CD8-positive, alpha-beta T cell (primary cell): ENCODE measurements at regions of chr20 and their contacts with region 1.

Region 1: DNA sequence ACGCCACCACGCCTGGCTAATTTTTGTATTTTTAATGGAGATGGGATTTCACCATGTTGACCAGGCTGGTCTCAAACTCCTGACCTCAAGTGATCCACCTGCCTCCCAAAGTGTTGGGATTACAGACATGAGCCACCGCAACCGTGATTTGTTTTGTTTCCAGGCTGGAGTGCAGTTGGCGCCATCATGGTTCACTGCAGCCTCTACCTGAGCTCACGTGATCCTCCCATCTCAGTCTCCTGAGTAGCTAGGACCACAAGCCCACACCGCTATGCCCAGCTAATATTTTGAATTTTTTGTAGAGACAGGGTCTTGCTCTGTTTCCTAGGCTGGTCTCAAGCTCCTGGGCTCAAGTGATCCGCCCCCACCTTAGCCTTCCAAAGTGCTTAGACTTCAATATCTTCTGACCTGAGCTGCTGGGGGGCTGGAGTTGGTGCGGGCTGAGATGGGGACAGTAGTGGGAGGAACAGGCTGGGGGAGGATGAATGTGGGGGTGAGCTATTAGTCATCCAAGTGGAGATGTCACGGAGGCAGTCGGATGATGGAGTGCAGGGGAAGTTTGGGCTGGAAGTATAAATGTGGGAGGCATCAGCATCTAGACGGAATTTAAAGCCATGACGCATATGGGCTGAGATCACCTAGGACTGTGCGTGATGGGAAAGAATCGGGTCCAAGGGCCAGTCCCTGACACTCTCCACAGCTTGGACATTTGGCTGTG is 23.1 kb upstream of the ZMYND8 start:
- DNase-seq: no peak
- ATAC-seq: no peak
- H3K4me3 ChIP-seq: no peak overlapping the region
- H3K4me3 Mint-ChIP-seq: no peak overlapping the region
- H3K27ac ChIP-seq: no peak overlapping the region
- H3K27ac Mint-ChIP-seq: no peak overlapping the region
- H3K4me1 ChIP-seq: peaks cover 10% of the 10 kb centered on the region
- H3K4me1 Mint-ChIP-seq: peaks cover 10% of the 10 kb centered on the region
- H3K27me3 ChIP-seq: no peaks in the 10 kb centered on the region
- H3K27me3 Mint-ChIP-seq: no peaks in the 10 kb centered on the region
- CTCF ChIP-seq: no peak

Region 2: GRCh38 chr20:47196091-47197081 is 183.2 kb before region 1 on chr20:
- CTCF ChIA-PET with region 1: interaction called, 115 read pairs
- POLR2A ChIA-PET with region 1: no interaction called
- intact Hi-C with region 1: loop called (anchors 1 kb)
- DNase-seq: peak; percentile 38 to 76 (median 71)
- ATAC-seq: peak; percentile 81
- H3K4me3 ChIP-seq: no peak overlapping the region
- H3K4me3 Mint-ChIP-seq: no peak overlapping the region
- H3K27ac ChIP-seq: no peak overlapping the region
- H3K27ac Mint-ChIP-seq: no peak overlapping the region
- H3K4me1 ChIP-seq: no peaks in the 10 kb centered on the region
- H3K4me1 Mint-ChIP-seq: peaks cover 4% of the 10 kb centered on the region
- H3K27me3 ChIP-seq: peaks cover 0 to 2% of the 10 kb centered on the region in 2 experiments
- H3K27me3 Mint-ChIP-seq: peaks cover 3% of the 10 kb centered on the region
- CTCF ChIP-seq: peak; percentile 90

Region 3: GRCh38 chr20:47231382-47232039 is 148.1 kb before region 1 on chr20:
- CTCF ChIA-PET with region 1: interaction called, 12 read pairs
- POLR2A ChIA-PET with region 1: no interaction called
- intact Hi-C with region 1: no loop called
- DNase-seq: no peak
- ATAC-seq: no peak
- H3K4me3 ChIP-seq: no peak overlapping the region
- H3K4me3 Mint-ChIP-seq: no peak overlapping the region
- H3K27ac ChIP-seq: no peak overlapping the region
- H3K27ac Mint-ChIP-seq: no peak overlapping the region
- H3K4me1 ChIP-seq: no peaks in the 10 kb centered on the region
- H3K4me1 Mint-ChIP-seq: no peaks in the 10 kb centered on the region
- H3K27me3 ChIP-seq: no peaks in the 10 kb centered on the region
- H3K27me3 Mint-ChIP-seq: no peaks in the 10 kb centered on the region
- CTCF ChIP-seq: no peak

Region 4: GRCh38 chr20:47290008-47290407 is 89.6 kb before region 1 on chr20:
- CTCF ChIA-PET with region 1: interaction called, 20 read pairs
- POLR2A ChIA-PET with region 1: no interaction called
- intact Hi-C with region 1: no loop called
- DNase-seq: no peak
- ATAC-seq: no peak
- H3K4me3 ChIP-seq: no peak overlapping the region
- H3K4me3 Mint-ChIP-seq: no peak overlapping the region
- H3K27ac ChIP-seq: no peak overlapping the region
- H3K27ac Mint-ChIP-seq: no peak overlapping the region
- H3K4me1 ChIP-seq: no peaks in the 10 kb centered on the region
- H3K4me1 Mint-ChIP-seq: no peaks in the 10 kb centered on the region
- H3K27me3 ChIP-seq: no peaks in the 10 kb centered on the region
- H3K27me3 Mint-ChIP-seq: no peaks in the 10 kb centered on the region
- CTCF ChIP-seq: no peak

Region 5: DNA sequence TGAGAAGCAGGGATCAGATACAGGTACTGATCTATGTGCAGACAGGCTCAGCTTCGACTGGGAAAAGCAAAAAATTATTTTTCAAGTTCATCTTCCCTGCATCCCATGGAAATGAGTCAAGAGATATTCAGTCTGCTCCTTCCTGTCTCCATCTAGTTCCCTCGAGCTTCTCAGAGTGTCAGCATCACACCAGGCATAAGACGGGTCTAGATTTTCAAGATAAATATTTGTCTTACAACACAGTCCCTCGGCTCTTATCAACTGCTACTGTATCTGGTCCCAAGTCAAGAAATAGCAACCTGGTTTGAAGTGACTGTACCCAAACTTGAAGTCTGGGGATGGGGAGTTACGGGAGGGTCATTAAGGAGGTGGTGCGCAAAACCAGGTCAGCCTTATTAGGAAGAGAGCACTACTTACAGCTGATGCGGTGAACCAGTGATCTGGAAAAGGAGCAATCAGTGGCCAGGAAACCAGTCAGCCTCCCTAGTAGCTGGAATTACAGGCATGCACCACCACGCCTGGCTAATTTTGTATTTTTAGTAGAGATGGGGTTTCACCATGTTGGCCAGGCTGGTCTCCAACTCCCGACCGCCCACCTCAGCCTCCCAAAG is 52.8 kb before region 1 on chr20:
- CTCF ChIA-PET with region 1: interaction called, 27 read pairs
- POLR2A ChIA-PET with region 1: no interaction called
- intact Hi-C with region 1: no loop called
- DNase-seq: no peak
- ATAC-seq: no peak
- H3K4me3 ChIP-seq: no peak overlapping the region
- H3K4me3 Mint-ChIP-seq: no peak overlapping the region
- H3K27ac ChIP-seq: no peak overlapping the region
- H3K27ac Mint-ChIP-seq: peak overlapping the region; percentile 74
- H3K4me1 ChIP-seq: peaks cover 24% of the 10 kb centered on the region
- H3K4me1 Mint-ChIP-seq: peaks cover 62% of the 10 kb centered on the region
- H3K27me3 ChIP-seq: no peaks in the 10 kb centered on the region
- H3K27me3 Mint-ChIP-seq: no peaks in the 10 kb centered on the region
- CTCF ChIP-seq: no peak

Region 6: GRCh38 chr20:47392015-47392720 is 12.6 kb after region 1 on chr20:
- CTCF ChIA-PET with region 1: interaction called, 22 read pairs
- POLR2A ChIA-PET with region 1: no interaction called
- intact Hi-C with region 1: no loop called
- DNase-seq: peak in 1 of 9 experiments; percentile 27
- ATAC-seq: no peak
- H3K4me3 ChIP-seq: no peak overlapping the region
- H3K4me3 Mint-ChIP-seq: no peak overlapping the region
- H3K27ac ChIP-seq: no peak overlapping the region
- H3K27ac Mint-ChIP-seq: no peak overlapping the region
- H3K4me1 ChIP-seq: no peaks in the 10 kb centered on the region
- H3K4me1 Mint-ChIP-seq: no peaks in the 10 kb centered on the region
- H3K27me3 ChIP-seq: no peaks in the 10 kb centered on the region
- H3K27me3 Mint-ChIP-seq: no peaks in the 10 kb centered on the region
- CTCF ChIP-seq: no peak

Region 7: GRCh38 chr20:47610247-47610944 is 230.8 kb after region 1 on chr20:
- CTCF ChIA-PET with region 1: interaction called, 21 read pairs
- POLR2A ChIA-PET with region 1: no interaction called
- intact Hi-C with region 1: no loop called
- DNase-seq: peak in 8 of 9 experiments; percentile 47 to 79 (median 58)
- ATAC-seq: peak; percentile 89
- H3K4me3 ChIP-seq: no peak overlapping the region
- H3K4me3 Mint-ChIP-seq: no peak overlapping the region
- H3K27ac ChIP-seq: peak overlapping the region in 1 of 2 experiments; percentile 37
- H3K27ac Mint-ChIP-seq: peak overlapping the region; percentile 63
- H3K4me1 ChIP-seq: peaks cover 34% of the 10 kb centered on the region
- H3K4me1 Mint-ChIP-seq: peaks cover 72% of the 10 kb centered on the region
- H3K27me3 ChIP-seq: no peaks in the 10 kb centered on the region
- H3K27me3 Mint-ChIP-seq: no peaks in the 10 kb centered on the region
- CTCF ChIP-seq: no peak

Region 8: DNA sequence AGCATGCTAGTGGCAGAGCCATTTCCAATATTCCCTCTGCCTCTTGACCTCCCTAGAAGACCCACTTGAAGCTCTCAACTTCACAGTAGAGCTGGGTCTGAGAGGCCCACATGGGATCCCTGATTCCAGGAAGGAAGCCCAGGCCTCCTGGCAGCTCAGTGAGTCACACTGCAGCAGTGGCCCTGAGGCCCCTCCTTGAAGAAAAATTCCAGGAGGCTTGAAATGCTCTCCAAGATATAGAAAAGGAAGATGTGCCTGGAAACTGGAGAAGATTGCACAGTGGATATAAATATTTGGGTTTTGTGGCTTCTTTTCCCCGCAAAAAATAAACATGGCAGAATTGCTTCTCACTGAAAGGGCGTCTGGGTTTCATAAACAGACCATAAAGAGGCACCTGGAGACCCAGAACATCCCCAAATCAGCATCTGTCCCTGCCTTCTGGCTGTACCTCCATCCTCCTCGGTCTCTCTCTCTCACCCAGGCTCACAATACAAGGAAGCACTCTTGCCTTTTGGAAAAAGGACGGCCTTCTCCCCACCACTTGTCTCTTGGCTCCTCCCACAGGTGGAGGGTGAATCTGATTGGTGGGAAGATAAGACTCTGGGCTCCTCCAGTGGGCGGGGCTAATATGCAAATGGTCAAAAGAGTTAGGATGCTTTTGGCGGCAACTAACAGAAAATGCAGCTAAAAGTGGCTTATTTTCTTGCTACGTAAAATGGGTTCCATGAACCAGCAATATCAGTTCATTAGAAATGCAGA is 605.7 kb after region 1 on chr20:
- CTCF ChIA-PET with region 1: no interaction called
- POLR2A ChIA-PET with region 1: no interaction called
- intact Hi-C with region 1: no loop called
- DNase-seq: no peak
- ATAC-seq: no peak
- H3K4me3 ChIP-seq: no peak overlapping the region
- H3K4me3 Mint-ChIP-seq: no peak overlapping the region
- H3K27ac ChIP-seq: no peak overlapping the region
- H3K27ac Mint-ChIP-seq: no peak overlapping the region
- H3K4me1 ChIP-seq: no peaks in the 10 kb centered on the region
- H3K4me1 Mint-ChIP-seq: no peaks in the 10 kb centered on the region
- H3K27me3 ChIP-seq: no peaks in the 10 kb centered on the region
- H3K27me3 Mint-ChIP-seq: peaks cover 6% of the 10 kb centered on the region
- CTCF ChIP-seq: no peak

Region 9: GRCh38 chr20:48025031-48025515 is 645.5 kb after region 1 on chr20:
- CTCF ChIA-PET with region 1: no interaction called
- POLR2A ChIA-PET with region 1: no interaction called
- intact Hi-C with region 1: no loop called
- DNase-seq: no peak
- ATAC-seq: no peak
- H3K4me3 ChIP-seq: no peak overlapping the region
- H3K4me3 Mint-ChIP-seq: no peak overlapping the region
- H3K27ac ChIP-seq: no peak overlapping the region
- H3K27ac Mint-ChIP-seq: no peak overlapping the region
- H3K4me1 ChIP-seq: no peaks in the 10 kb centered on the region
- H3K4me1 Mint-ChIP-seq: no peaks in the 10 kb centered on the region
- H3K27me3 ChIP-seq: no peaks in the 10 kb centered on the region
- H3K27me3 Mint-ChIP-seq: peaks cover 13% of the 10 kb centered on the region
- CTCF ChIP-seq: no peak